Caco-2 (cell line): ENCODE measurements at regions of chr1 and their contacts with region 1.

Region 1: DNA sequence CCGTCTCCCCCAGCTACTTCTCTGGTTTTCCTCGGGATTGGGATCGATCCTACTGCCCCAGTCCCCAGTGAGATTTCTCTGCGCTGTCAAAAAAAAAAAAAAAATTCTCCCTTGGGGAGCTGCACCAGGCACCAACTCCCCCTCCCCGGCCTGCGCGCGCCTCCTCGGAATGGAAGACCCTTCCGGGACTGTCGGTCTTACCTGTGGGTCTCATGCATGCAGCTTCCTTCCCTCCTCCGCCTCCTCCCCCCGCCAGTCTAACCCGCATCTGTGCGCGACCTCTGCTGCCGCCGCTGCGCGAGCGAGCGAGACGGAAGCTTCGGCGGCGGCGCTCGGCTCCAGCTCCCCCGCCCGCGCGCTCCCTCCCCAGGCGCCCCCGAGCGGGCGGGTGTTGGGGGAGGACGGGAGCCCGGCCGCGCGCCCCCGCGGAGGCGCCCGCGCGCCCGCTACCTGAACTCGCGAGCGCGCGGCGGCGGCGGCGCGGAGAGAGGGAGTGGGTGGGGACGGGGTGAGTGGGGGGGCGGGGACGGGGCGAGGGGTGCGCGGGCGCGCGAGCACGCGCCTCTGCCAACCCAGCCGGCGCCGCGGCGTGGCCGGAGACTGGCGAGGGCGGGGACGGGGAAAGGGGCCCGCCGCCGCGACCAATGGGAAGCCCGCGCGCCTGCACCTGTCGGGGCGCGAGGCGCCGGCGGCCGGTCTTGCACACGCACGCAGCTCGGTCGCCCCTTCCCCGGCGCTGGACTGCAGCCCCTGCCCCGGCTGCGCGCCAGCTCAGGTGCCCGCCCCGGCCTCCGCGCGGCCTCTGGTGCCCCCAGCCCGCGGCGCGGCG is at the start of gene SUSD4:
- DNase-seq: peak; percentile 59 to 84
- H3K4me3 ChIP-seq: peak within 1 kb of the TSS; percentile 42
- H3K4me3 Mint-ChIP-seq: peak within 1 kb of the TSS; percentile 92
- H3K27ac Mint-ChIP-seq: peak within 1 kb of the TSS; percentile 11
- H3K4me1 ChIP-seq: no peaks in the 10 kb centered on the region; the same call in 1 of the 2 replicates
- H3K4me1 Mint-ChIP-seq: peaks cover 5% of the 10 kb centered on the region
- H3K27me3 ChIP-seq: no peaks in the 10 kb centered on the region; the same call in 1 of the 2 replicates
- H3K27me3 Mint-ChIP-seq: no peaks in the 10 kb centered on the region
- CTCF ChIP-seq: no peak
- total RNA-seq, gene SUSD4: 31.4 and 36.7 TPM in 2 replicates

Region 2: GRCh38 chr1:223175032-223175431 is 189.0 kb before region 1 on chr1:
- CTCF ChIA-PET with region 1: interaction called, 12 read pairs
- POLR2A ChIA-PET with region 1: no interaction called
- intact Hi-C with region 1: loop called (anchors 5 kb)
- DNase-seq: peak; percentile 63 to 66
- H3K4me3 ChIP-seq: no peak overlapping the region
- H3K4me3 Mint-ChIP-seq: no peak overlapping the region
- H3K27ac Mint-ChIP-seq: peak overlapping the region; percentile 35
- H3K4me1 ChIP-seq: peaks cover 5% of the 10 kb centered on the region
- H3K4me1 Mint-ChIP-seq: peaks cover 5% of the 10 kb centered on the region
- H3K27me3 ChIP-seq: no peaks in the 10 kb centered on the region
- H3K27me3 Mint-ChIP-seq: no peaks in the 10 kb centered on the region
- CTCF ChIP-seq: peak; percentile 45 to 70

Region 3: DNA sequence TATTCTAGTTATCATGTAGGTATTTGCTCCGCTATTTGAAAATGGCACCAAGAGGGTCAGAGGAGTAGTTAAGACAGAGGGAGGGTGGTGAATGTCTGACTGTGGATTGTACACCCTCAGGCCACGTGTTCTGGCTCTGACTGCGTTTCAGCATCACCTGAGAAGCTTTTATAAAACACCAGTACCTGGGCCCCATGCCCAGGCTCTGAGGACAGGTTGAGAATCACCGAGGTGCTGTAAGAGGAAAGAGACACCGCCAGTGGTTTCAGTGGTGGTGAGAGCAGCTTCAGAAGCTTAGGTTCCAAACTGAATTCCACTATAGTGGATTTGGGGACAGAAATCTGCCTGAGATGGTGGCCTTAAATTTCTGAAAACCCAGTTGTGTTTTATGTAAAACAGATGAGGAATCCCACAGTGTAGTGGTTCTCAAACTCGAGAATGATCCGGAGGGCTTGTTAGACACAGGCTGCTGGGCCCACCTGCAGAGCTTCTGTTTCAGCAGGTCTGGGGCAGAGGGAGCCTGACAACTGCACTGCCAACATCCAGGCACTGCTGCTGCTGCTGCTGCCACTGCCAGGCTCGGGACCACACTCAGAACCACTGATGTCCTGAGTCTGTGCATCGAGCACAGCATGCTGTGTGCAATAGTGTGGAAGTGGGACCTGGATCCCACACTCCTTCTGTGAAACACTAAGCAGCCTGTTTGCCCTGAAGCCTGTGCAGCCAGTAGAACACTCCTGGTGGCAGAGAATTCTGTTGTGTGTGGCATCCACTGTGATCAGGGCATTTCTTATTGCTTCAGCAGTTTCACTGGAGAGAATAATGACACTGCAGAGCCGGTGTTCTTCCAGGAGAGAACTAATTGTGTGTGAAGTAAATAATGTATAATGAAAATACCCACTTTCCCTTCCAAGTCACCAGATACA is 98.8 kb before region 1 on chr1:
- CTCF ChIA-PET with region 1: no interaction called
- POLR2A ChIA-PET with region 1: no interaction called
- intact Hi-C with region 1: loop called (anchors 5 kb)
- DNase-seq: no peak
- H3K4me3 ChIP-seq: no peak overlapping the region
- H3K4me3 Mint-ChIP-seq: no peak overlapping the region
- H3K27ac Mint-ChIP-seq: no peak overlapping the region
- H3K4me1 ChIP-seq: peaks cover 11% of the 10 kb centered on the region
- H3K4me1 Mint-ChIP-seq: peaks cover 35% of the 10 kb centered on the region
- H3K27me3 ChIP-seq: no peaks in the 10 kb centered on the region
- H3K27me3 Mint-ChIP-seq: no peaks in the 10 kb centered on the region
- CTCF ChIP-seq: no peak

Region 4: DNA sequence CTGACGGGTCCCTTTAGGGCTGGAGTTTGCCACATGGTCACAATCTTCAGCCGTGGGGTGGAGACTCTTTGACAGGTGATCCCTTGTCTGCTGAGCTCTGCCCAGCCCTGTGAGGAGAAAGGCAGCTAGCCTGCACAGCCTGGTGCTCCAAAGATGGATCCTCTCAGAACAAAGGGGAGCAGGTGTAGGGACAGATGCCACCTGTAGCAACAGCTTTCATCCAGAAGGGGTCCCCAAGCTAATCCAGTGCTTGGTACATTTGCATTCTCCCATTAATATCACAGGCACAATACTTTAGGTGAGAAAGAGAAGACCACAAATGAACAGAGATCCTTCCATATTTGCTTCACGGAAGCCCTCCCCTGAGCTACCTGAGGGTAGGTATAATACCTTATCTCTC is 122.3 kb after region 1 on chr1:
- CTCF ChIA-PET with region 1: no interaction called
- POLR2A ChIA-PET with region 1: no interaction called
- intact Hi-C with region 1: no loop called
- DNase-seq: peak in 1 of 2 experiments; percentile 16
- H3K4me3 ChIP-seq: no peak overlapping the region
- H3K4me3 Mint-ChIP-seq: no peak overlapping the region
- H3K27ac Mint-ChIP-seq: no peak overlapping the region
- H3K4me1 ChIP-seq: peaks cover 12% of the 10 kb centered on the region
- H3K4me1 Mint-ChIP-seq: peaks cover 19% of the 10 kb centered on the region
- H3K27me3 ChIP-seq: no peaks in the 10 kb centered on the region
- H3K27me3 Mint-ChIP-seq: no peaks in the 10 kb centered on the region
- CTCF ChIP-seq: peak in 1 of 2 experiments; percentile 38